Right lobe of liver (tissue), 6 donors: ENCODE measurements at regions of chr22 and their contacts with region 1.

Region 1: GRCh38 chr22:24525416-24526037 is 29.4 kb downstream of the GUCD1 start:
- DNase-seq: peak; percentile 79 to 90 (median 81)
- ATAC-seq: peak; percentile 88 to 91 (median 89)
- H3K4me3 ChIP-seq: no peak overlapping the region
- H3K27ac ChIP-seq: peak overlapping the region in 2 of 3 donors; percentile 7 to 50
- H3K4me1 ChIP-seq: peaks cover 0 to 56% (median 17%) of the 10 kb centered on the region in 4 donors
- H3K27me3 ChIP-seq: no peaks in the 10 kb centered on the region
- CTCF ChIP-seq: peak; percentile 85 to 92 (median 90)
- POLR2A ChIP-seq: no peak

Region 2: GRCh38 chr22:24325105-24325757 is 200.3 kb before region 1 on chr22:
- intact Hi-C with region 1: loop called in 1 of 2 experiments (anchors 10 kb)
- DNase-seq: no peak
- ATAC-seq: peak; percentile 76 to 87 (median 82)
- H3K4me3 ChIP-seq: peak overlapping the region; percentile 36 to 40 (median 39)
- H3K27ac ChIP-seq: peak overlapping the region; percentile 78 to 94 (median 87)
- H3K4me1 ChIP-seq: peaks cover 0 to 27% (median 9%) of the 10 kb centered on the region in 4 donors
- H3K27me3 ChIP-seq: no peaks in the 10 kb centered on the region
- CTCF ChIP-seq: peak; percentile 58 to 80 (median 80)
- POLR2A ChIP-seq: no peak

Region 3: GRCh38 chr22:24429411-24430365 is 95.8 kb before region 1 on chr22:
- intact Hi-C with region 1: loop called in 1 of 2 experiments (anchors 5 kb)
- DNase-seq: peak in 2 of 3 donors; percentile 70
- ATAC-seq: peak in 1 of 4 donors; percentile 10
- H3K4me3 ChIP-seq: no peak overlapping the region
- H3K27ac ChIP-seq: peak overlapping the region in 1 of 3 donors; percentile 2
- H3K4me1 ChIP-seq: peaks cover 0 to 43% (median 20%) of the 10 kb centered on the region in 4 donors
- H3K27me3 ChIP-seq: no peaks in the 10 kb centered on the region
- CTCF ChIP-seq: no peak
- POLR2A ChIP-seq: no peak